Right ventricle myocardium inferior (tissue), 1 donor: ENCODE measurements at regions of chr11 and their contacts with region 1.

Region 1: GRCh38 chr11:117039900-117040299 is 58.3 kb downstream of the SIK3 start:
- DNase-seq: no peak
- ATAC-seq: no peak

Region 2: DNA sequence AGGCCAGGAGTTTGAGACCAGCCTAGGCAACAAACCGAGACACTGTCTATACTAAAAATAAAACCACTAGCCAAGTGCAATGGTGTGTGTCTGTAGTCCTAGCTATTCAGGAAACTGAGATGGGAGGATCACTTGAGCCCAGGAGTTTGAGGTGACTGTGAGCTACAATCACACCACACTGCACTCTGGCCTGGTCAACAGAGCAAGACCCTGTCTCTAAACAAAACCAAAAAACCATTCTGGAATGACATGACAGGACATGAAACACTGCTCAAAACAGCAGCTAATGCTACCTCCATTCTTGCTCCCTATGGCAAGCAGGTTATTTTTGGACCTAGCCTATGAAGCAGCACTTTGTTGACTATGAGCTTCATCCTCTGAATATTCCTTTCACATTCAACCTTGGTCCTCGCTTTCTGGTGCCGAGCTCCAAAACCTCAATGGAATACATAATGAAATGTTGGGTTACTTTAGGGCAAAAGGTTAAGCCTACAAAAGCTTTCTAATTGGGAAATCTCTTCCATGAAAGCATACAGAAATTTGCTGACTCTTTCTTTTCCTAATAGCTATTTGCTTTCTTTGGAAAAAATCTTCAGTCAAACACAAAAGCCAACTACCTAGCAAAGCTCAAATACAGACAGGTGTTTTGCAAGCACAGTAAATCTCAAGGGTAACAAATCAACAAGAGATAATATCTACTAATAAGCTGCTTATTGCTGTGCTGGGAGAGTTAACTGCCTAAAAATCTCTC is 37.2 kb after region 1 on chr11:
- intact Hi-C with region 1: loop called (anchors 5 kb)
- DNase-seq: no peak
- ATAC-seq: no peak